ENCODE measurements at regions of chr9 and their contacts with region 1.

Region 1: DNA sequence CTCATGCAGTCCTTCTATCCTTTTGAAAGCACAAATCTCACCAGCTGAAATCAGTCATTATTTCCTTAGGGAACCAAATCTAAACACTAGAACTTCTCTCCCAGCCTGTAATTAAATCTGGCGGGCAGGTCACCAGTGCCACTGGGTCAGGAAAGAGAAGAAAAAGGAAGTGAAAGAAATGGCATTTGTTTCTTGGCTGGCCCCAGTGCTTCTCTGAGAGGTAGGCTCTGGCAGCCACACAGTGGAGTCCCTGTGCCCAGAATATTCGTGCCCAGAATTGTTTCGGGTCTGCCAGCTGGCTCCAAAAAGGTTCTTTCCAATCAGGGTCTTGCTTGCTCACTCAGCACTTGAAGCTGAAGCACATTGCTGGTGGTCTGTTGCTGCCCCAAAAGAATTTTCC is 133.9 kb upstream of the MTAP start:
- DNase-seq: no peak
- ATAC-seq: no peak
- H3K4me3 ChIP-seq: no peak overlapping the region
- H3K27ac ChIP-seq: peak overlapping the region; percentile 99
- H3K4me1 ChIP-seq: peaks cover 58 to 81% of the 10 kb centered on the region in 2 experiments
- H3K27me3 ChIP-seq: no peaks in the 10 kb centered on the region
- CTCF ChIP-seq: no peak
- POLR2A ChIP-seq: no peak
- RAD21 ChIP-seq: no peak

Region 2: DNA sequence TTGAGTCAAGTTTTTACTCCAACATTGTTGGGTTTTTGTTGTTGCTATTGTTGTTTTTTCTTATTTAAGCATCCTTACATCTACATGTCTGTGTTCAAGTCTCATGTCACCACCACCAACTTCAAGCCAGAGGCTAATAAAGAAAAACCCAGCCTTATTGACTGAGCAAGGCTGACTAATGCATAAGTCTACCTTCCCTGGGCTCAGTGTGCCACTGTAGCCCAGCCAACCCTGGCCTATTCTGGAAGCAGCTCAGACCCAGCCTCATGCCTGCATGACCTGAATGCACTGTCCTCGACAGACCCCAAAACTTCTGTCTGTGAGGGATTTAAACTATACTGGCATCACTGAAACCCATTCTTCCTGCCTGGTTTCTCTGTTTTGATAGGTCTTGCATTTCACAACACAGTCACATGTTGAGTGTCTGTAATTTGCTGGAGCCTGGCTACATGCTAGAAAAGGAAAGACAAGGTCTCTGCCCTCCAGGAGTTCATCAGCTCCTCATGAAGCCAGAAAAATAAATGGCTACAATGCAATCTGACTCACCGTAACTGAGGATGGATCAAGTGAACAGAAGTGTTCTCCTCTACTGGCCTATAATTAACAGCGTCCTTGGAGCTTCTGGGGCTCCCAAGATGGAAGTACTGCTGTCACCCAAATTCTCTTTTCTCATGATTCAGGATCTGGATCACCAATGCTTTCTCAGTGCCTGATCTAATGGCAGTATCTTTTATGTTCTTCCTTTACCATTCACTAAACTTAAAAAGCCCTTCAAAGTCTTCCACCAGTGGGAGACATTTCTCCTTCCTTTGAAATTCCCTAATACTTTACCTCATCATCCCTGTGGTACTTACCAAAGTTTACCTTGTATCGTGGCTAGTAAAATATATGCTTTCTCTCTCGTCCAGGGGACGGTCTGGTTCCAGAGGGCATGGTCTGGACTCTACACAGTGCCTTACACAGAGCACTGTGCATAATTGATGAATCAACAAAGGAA is 82.5 kb before region 1 on chr9:
- CTCF ChIA-PET with region 1: no interaction called
- POLR2A ChIA-PET with region 1: interaction called, 37 read pairs
- RAD21 ChIA-PET with region 1: no interaction called
- intact Hi-C with region 1: no loop called
- DNase-seq: no peak
- ATAC-seq: 0 out of 2 replicates have a peak, but pooled peaks have one; percentile 9
- H3K4me3 ChIP-seq: no peak overlapping the region
- H3K27ac ChIP-seq: peak overlapping the region; percentile 99
- H3K4me1 ChIP-seq: peaks cover 88 to 99% of the 10 kb centered on the region in 2 experiments
- H3K27me3 ChIP-seq: no peaks in the 10 kb centered on the region
- CTCF ChIP-seq: peak in 1 of 3 experiments; percentile 40; a peak in 2 of 6 replicates
- POLR2A ChIP-seq: no peak
- RAD21 ChIP-seq: 0 out of 2 replicates have a peak, but pooled peaks have one; percentile 25

Region 3: GRCh38 chr9:21919377-21920362 is 251.2 kb after region 1 on chr9:
- CTCF ChIA-PET with region 1: no interaction called
- POLR2A ChIA-PET with region 1: no interaction called
- RAD21 ChIA-PET with region 1: no interaction called
- intact Hi-C with region 1: no loop called
- DNase-seq: peak; percentile 37
- ATAC-seq: peak; percentile 70
- H3K4me3 ChIP-seq: peak overlapping the region in 1 of 2 experiments; percentile 4; a peak in 1 of 4 replicates
- H3K27ac ChIP-seq: peak overlapping the region; percentile 7
- H3K4me1 ChIP-seq: peaks cover 15 to 19% of the 10 kb centered on the region in 2 experiments; a peak in 3 of 4 replicates
- H3K27me3 ChIP-seq: no peaks in the 10 kb centered on the region
- CTCF ChIP-seq: no peak
- POLR2A ChIP-seq: no peak
- RAD21 ChIP-seq: no peak

Measured in HCT116 (cell line).